Adrenal gland (tissue), 19 donors: ENCODE measurements at regions of chrX and their contacts with region 1.

Region 1: DNA sequence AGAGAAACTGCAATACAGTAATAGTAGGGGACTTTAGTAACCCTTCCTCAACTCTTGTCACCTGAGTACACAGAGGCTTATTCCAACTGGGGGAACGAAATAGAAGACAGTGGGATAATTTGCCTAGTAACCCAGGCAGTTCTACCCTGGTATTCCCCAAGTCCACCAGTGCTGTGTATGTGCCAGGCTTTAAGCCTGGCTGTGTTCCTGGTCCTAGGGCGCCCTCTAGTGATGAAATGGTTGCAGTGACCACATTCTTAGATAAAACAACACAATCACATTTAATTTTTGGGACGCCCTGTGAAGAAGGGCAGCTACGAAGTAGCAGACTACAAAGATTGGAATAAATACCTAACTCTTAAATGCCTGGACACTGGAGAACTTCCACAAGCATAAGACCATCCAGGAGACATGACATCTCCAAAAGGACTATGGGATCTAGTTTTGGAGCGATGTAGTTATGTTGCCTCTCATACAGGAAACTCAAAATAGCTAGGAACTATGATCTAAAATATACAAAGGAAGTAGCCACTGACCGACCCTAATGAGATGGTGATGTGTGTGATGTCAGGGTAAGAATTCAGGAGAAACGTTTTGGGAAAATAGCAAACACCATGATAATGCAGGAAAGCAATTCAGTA is 288.5 kb upstream of the ZCCHC13 start:
- DNase-seq: peak; percentile 62 to 83 (median 72)
- H3K4me3 ChIP-seq: no peak overlapping the region
- H3K27ac ChIP-seq: no peak overlapping the region
- H3K4me1 ChIP-seq: no peaks in the 10 kb centered on the region
- H3K27me3 ChIP-seq: no peaks in the 10 kb centered on the region
- CTCF ChIP-seq: peak; percentile 64 to 92 (median 82)
- POLR2A ChIP-seq: no peak

Region 2: GRCh38 chrX:73850124-73851013 is 165.1 kb before region 1 on chrX:
- intact Hi-C with region 1: loop called in 1 of 2 experiments (anchors 5 kb)
- DNase-seq: peak in 6 of 7 donors; percentile 32 to 60 (median 46)
- H3K4me3 ChIP-seq: peak overlapping the region in 1 of 4 donors; percentile 50
- H3K27ac ChIP-seq: peak overlapping the region in 1 of 5 donors; percentile 71
- H3K4me1 ChIP-seq: peaks cover 0 to 29% of the 10 kb centered on the region in 2 donors
- H3K27me3 ChIP-seq: no peaks in the 10 kb centered on the region
- CTCF ChIP-seq: peak in 4 of 6 experiments; percentile 6 to 22 (median 12)
- POLR2A ChIP-seq: no peak

Region 3: DNA sequence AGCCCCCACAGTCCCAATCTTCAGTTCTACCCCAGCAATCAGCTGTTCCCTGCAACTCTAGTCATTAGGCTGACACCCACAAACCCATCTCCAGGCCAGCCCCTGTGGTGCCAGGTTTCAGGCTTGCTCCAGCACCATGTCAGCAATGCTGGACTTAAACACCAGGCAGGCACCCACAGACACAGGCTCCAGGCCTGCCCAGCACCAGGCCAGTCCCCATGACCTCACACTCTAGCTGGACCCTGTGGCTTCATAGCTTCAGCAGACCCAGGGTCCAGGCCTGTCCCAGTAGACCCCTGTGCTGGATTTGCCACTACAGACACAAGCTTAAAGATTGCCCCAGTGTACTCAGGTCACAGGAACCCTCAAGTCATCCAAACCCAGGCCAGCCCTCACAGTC is 152.2 kb before region 1 on chrX:
- intact Hi-C with region 1: loop called in 1 of 2 experiments (anchors 10 kb)
- DNase-seq: no peak
- H3K4me3 ChIP-seq: no peak overlapping the region
- H3K27ac ChIP-seq: no peak overlapping the region
- H3K4me1 ChIP-seq: no peaks in the 10 kb centered on the region
- H3K27me3 ChIP-seq: peaks cover 8% of the 10 kb centered on the region
- CTCF ChIP-seq: no peak
- POLR2A ChIP-seq: no peak

Region 4: DNA sequence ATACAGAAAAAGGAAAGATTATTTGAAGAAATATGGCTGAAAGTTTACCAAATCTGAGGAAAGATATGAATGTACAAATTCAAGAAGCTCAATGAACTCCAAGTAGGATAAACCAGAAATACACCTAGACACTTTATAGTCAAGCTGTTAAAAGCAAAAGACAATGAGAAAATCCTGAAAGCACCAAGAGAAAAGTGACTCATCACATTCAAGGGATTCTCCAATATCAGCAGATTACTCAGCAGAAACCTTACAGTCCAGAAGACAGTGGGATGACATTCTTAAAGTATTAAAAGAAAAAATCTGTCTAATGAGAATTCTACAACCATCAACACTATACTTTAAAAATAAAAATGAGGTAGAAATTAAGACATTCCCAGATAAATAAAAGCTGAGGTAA is 64.7 kb after region 1 on chrX:
- intact Hi-C with region 1: no loop called
- DNase-seq: no peak
- H3K4me3 ChIP-seq: no peak overlapping the region
- H3K27ac ChIP-seq: no peak overlapping the region
- H3K4me1 ChIP-seq: no peaks in the 10 kb centered on the region
- H3K27me3 ChIP-seq: peaks cover 10% of the 10 kb centered on the region
- CTCF ChIP-seq: no peak
- POLR2A ChIP-seq: no peak